Gastrocnemius medialis (tissue), 4 donors: ENCODE measurements at regions of chr12 and their contacts with region 1.

Region 1: GRCh38 chr12:3315201-3315661 is 175.8 kb upstream of the PRMT8 start:
- DNase-seq: peak; percentile 30 to 57
- ATAC-seq: peak; percentile 74 to 76
- H3K4me3 ChIP-seq: no peak overlapping the region
- H3K27ac ChIP-seq: no peak overlapping the region
- H3K4me1 ChIP-seq: peaks cover 0 to 7% of the 10 kb centered on the region in 2 donors
- H3K27me3 ChIP-seq: no peaks in the 10 kb centered on the region
- CTCF ChIP-seq: no peak
- POLR2A ChIP-seq: no peak

Region 2: GRCh38 chr12:2101771-2102170 is 1213.5 kb before region 1 on chr12:
- in situ Hi-C with region 1: no loop called
- intact Hi-C with region 1: no loop called
- DNase-seq: no peak
- ATAC-seq: no peak
- H3K4me3 ChIP-seq: no peak overlapping the region
- H3K27ac ChIP-seq: no peak overlapping the region
- H3K4me1 ChIP-seq: no peaks in the 10 kb centered on the region
- H3K27me3 ChIP-seq: no peaks in the 10 kb centered on the region
- CTCF ChIP-seq: no peak
- POLR2A ChIP-seq: no peak

Region 3: DNA sequence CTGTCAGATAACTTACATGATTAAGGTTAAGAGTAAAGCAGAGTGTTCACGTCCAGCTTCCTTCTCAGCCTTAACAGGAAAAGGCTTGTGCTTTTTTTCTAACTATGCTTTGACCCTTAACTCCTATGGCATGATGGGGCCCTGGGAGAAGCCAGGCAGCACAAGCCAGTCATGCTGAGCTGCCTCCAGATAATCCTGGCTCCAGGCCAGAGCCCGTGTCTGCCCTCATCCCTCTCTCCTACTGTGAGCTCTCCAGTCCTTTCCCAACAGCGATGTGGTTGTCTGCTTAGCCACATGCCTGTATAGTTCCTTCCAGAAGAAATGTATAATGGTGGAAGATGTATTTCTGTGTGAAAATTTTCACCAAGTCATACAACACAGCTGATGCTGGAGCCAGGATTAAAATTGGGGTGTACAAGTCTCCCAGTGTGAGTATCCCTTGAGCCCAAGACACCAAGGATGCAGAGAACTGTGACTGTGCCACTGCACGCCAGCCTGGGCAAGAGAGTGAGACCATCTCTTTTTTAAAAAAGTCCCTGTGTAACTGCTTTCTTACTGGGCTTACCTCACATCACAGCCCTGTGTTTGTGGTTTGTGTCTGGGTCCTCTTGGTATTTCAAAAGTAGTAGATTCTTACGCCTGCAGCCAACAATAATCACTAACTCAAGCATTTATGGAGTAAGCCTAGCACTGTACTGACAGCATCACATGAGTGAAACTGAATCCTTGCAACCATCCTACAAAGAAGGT is 510.7 kb before region 1 on chr12:
- in situ Hi-C with region 1: no loop called
- intact Hi-C with region 1: no loop called
- DNase-seq: peak in 1 of 2 donors; percentile 32
- ATAC-seq: no peak
- H3K4me3 ChIP-seq: no peak overlapping the region
- H3K27ac ChIP-seq: peak overlapping the region in 1 of 4 donors; percentile 4
- H3K4me1 ChIP-seq: peaks cover 6% of the 10 kb centered on the region in 2 donors
- H3K27me3 ChIP-seq: no peaks in the 10 kb centered on the region
- CTCF ChIP-seq: no peak
- POLR2A ChIP-seq: no peak

Region 4: DNA sequence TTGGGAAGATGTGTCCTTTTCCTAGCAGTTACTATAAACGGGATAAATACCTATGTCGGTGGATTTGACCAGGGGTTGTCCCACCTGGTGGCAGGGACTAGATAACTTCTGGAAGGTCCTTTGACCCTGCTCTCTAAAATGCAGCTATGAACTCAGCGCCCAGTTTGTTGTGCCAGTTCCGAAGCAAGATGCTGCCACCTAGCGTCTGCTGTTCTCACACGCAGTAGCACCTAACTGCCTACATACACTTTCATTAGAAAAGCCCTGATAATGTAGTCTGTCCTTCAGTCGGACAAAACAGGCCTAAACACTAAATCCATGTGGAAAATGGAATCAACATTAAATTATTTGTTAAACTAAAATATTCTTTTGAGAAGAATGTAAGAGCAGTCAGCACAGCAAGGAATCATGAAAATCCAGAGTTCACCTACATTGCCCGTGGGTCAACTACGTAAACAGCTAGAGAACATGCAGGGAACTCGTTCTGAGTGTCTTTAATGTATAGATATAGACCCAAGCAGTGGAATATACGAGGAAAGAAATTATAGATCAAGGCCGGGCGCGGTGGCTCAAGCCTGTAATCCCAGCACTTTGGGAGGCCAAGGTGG is 488.7 kb after region 1 on chr12:
- in situ Hi-C with region 1: no loop called
- intact Hi-C with region 1: loop called (anchors 5 kb)
- DNase-seq: peak; percentile 26 to 59
- ATAC-seq: peak; percentile 73 to 86
- H3K4me3 ChIP-seq: no peak overlapping the region
- H3K27ac ChIP-seq: no peak overlapping the region
- H3K4me1 ChIP-seq: no peaks in the 10 kb centered on the region
- H3K27me3 ChIP-seq: no peaks in the 10 kb centered on the region
- CTCF ChIP-seq: peak; percentile 60 to 83 (median 71)
- POLR2A ChIP-seq: no peak